Calu3 (cell line): ENCODE measurements at regions of chr12 and their contacts with region 1.

Region 1: DNA sequence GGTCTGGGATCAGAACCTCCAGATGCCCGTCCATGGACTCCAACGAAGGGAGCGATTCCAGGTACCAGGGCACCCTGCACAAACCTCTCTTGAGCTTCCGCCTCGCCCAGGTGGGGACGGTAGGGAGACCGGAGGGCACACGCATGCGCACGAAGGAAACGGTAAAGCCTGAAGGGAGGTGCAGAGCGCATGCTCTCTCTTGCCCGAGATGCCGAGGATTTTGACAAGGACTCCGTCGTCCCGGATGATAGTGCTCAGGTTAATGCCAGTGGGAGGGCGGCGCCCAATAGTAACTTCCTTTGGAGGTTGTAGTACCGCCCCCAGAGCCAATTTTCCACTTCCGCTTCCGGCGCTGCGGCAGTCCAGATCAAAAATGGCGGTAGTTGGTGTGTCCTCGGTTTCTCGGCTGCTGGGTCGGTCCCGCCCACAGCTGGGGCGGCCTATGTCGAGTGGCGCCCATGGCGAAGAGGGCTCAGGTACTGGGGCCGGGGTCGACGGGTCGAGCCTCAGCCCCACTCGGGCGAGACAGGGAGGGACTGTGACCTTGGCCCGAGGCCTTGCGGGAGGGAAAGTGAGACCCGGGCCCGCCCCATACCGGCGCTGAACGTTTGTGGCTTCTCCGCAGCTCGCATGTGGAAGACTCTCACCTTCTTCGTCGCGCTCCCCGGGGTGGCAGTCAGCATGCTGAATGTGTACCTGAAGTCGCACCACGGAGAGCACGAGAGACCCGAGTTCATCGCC is at the start of gene COX6A1:
- DNase-seq: peak; percentile 98
- H3K4me3 Mint-ChIP-seq: peak within 1 kb of the TSS; percentile 82
- H3K27ac Mint-ChIP-seq: peak within 1 kb of the TSS; percentile 46
- H3K4me1 Mint-ChIP-seq: no peaks in the 10 kb centered on the region
- H3K27me3 Mint-ChIP-seq: no peaks in the 10 kb centered on the region
- CTCF ChIP-seq: no peak
- total RNA-seq, gene COX6A1: 482 and 487 TPM in 2 replicates

Region 2: GRCh38 chr12:120469450-120470149 is 31.7 kb after region 1 on chr12 and contains the start of gene SRSF9:
- CTCF ChIA-PET with region 1: interaction called, 11 read pairs
- intact Hi-C with region 1: no loop called
- DNase-seq: peak; percentile 98
- H3K4me3 Mint-ChIP-seq: peak within 1 kb of the TSS; percentile 95
- H3K27ac Mint-ChIP-seq: peak within 1 kb of the TSS; percentile 62
- H3K4me1 Mint-ChIP-seq: peaks cover 49% of the 10 kb centered on the region
- H3K27me3 Mint-ChIP-seq: no peaks in the 10 kb centered on the region
- CTCF ChIP-seq: peak; percentile 93
- total RNA-seq, gene SRSF9: 284 and 292 TPM in 2 replicates